ENCODE measurements at regions of chr1 and their contacts with region 1.

Region 1: DNA sequence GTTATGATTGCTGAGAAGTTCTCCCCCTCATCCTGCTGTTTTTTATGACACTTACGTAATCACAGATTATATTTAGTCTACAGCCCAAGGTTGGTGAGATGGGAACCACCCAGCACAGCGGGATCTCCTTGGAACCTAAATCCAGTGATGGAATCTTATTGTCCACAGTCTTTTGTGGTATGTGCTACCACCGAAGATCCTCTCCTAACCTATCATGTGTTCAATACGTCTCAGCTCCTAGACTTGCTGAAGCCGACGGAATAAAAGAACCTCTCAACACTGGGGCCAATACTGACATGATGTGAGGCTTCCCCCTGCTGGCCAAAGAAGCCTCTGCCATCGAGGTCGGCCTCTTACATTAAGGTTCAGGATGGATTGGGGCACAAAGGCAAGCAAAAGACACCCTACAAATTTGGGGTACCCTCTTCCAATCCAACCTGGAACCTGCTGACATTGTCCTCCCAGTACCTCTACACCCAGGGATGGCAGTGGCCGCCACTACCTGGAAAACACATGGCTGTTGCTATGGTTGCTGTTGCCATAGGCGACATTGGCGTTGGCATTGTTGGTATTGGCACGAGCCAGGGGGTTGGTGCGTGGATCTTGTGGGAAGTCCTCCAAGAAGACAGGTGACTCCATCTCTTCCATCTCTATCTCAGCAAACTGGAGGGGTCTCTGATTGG is 19.4 kb upstream of the KIF21B start:
- DNase-seq: peak; percentile 53
- H3K4me3 ChIP-seq: no peak overlapping the region
- CTCF ChIP-seq: peak; percentile 93

Region 2: GRCh38 chr1:200561856-200562214 is 481.1 kb before region 1 on chr1:
- in situ Hi-C with region 1: loop called (anchors 10 kb)
- DNase-seq: no peak
- H3K4me3 ChIP-seq: no peak overlapping the region
- CTCF ChIP-seq: no peak

Region 3: DNA sequence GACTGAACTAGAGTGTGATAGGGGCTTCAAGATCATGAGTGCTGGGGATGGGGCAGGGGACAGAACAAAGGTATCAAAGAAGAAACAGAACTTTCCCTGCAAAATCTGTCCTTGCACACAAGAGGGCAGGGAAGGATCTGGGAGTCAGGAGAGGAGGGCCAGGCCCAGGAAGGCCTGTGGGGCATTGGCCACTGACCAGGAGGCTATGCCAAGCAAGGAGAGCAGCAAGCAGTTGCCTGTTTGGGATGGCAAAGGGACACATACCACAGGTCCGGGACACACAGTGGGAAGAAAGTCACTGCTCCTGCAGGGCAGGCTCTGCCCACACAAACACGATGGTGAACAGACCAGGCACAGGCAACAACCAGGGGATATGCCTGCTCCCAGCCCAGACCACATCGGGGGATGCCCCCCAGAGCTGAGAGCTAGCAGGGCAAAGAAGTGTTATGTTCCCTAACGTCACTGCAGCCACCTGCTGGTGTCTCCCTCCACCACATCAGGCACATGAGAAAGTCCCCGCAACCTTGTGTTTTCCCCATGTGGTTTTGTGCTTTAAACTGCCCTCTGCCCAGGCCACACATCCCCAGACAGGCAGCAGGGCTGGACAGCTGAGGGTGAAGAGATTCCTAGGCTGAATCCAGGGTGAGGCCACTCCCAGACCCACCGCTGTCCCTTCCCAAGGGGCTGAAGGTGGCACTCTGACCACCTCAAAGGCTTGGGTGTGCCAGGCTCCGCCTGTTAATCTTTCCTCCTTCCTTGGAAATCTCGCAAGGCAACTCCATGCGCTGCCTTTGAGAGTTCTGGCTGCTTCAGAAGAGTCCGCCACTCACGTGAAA is 73.0 kb before region 1 on chr1:
- in situ Hi-C with region 1: loop called (anchors 10 kb)
- DNase-seq: no peak
- H3K4me3 ChIP-seq: no peak overlapping the region
- CTCF ChIP-seq: no peak